Left ventricle myocardium superior (tissue), 1 donor: ENCODE measurements at regions of chr10 and their contacts with region 1.

Region 1: DNA sequence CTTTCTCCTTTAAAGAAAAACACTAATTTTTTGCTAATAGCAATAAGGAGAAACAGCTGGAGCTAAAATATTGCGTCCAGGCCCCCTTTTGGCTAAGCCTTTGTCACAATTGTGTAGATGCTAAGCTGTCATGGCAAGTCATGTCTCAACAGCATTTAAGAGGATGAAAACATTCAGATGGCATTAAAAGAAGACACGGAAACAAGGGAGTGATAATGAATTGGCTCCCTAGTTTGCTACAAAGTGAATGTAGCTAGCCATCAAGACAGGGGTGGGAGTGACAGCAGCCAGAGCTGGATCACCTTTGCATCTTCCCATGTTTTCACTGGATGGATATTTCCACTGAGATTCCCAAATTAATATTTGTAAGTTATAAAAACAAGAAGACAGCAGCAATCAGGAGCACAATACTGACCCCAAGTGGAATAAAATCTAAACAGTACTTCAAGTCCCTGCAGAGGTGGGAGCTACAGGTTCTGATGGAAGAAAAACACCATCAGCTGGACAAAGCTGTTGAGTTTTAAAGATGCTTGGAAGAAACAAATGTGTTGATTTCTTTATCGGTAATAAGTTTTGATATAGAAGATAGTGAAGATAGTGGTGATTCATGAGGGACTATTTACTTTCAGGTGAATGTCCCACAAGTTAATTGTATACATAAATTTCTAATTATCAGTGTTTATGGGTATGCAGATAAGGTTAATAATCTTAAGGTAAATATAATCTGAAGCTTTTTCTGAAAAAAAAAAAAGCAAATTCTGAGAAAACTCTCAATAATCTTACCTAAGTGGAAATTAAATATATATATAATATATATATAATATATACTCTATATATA is 129.4 kb downstream of the SLC16A9 start:
- DNase-seq: no peak
- ATAC-seq: peak; percentile 62

Region 2: DNA sequence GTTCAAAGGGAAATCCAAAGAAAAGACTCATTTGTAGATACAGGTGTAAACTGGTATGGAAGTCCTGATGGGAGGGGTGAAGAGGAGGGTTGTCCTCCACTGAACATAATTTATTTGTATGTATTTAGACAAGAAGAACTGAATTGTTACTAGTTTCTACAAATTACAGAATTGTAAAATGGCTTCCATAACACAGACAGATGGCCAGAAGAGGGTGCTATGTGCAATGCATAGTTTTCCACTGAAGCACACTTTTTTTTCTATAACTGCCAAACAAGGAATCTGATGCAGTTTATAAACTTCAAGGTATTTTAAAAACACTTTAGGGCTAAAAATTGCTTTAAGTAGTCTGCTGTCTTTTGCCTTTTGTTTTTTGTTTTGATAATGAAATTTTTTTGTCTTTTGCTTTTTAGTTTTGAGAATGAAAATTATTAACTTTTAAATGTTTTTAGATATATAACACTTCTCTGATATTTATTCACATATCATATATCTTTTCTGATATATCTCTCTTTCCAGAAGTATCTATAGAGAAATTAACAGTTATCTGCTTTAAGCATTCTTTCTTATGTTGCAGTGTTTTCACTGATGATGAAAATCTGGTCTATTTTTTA is 345.3 kb before region 1 on chr10:
- intact Hi-C with region 1: loop called (anchors 10 kb)
- DNase-seq: no peak
- ATAC-seq: no peak